ENCODE measurements at regions of chr7 and their contacts with region 1.

Region 1: GRCh38 chr7:43756368-43757072 is 2.0 kb upstream of the BLVRA start:
- DNase-seq: peak in 1 of 5 donors; percentile 18
- ATAC-seq: no peak
- H3K4me3 ChIP-seq: no peak overlapping the region
- H3K27ac ChIP-seq: peak overlapping the region in 1 of 12 donors; percentile 82
- H3K4me1 ChIP-seq: peaks cover 0 to 59% (median 8%) of the 10 kb centered on the region in 12 donors
- H3K27me3 ChIP-seq: no peaks in the 10 kb centered on the region
- CTCF ChIP-seq: no peak
- POLR2A ChIP-seq: no peak

Region 2: DNA sequence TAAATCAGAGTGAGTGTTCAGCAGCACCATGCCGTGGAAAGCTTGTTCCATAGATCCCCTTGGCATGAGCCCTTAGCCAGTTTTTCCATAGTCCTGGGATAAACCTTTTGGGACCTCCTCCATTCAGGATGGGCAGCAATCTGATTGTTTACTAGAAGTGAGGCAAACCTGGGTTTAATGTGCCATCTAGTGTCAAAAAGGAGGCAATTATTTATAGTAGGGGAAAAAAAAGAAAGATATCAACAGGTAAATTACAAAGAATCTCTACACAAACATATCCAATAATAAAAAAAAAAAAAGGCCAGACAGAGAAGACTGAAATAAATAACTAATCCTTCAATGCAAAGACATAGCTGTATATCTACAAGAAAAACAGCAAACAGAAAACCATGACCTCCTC is 402.6 kb before region 1 on chr7:
- intact Hi-C with region 1: no loop called
- DNase-seq: no peak
- ATAC-seq: no peak
- H3K4me3 ChIP-seq: no peak overlapping the region
- H3K27ac ChIP-seq: no peak overlapping the region
- H3K4me1 ChIP-seq: no peaks in the 10 kb centered on the region
- H3K27me3 ChIP-seq: peaks cover 0 to 12% (median 0%) of the 10 kb centered on the region in 9 donors
- CTCF ChIP-seq: no peak
- POLR2A ChIP-seq: no peak

Region 3: GRCh38 chr7:43621729-43622448 is 134.6 kb before region 1 on chr7:
- intact Hi-C with region 1: no loop called
- DNase-seq: no peak
- ATAC-seq: no peak
- H3K4me3 ChIP-seq: no peak overlapping the region
- H3K27ac ChIP-seq: peak overlapping the region in 1 of 12 donors; percentile 9
- H3K4me1 ChIP-seq: peaks cover 0 to 55% (median 10%) of the 10 kb centered on the region in 12 donors
- H3K27me3 ChIP-seq: no peaks in the 10 kb centered on the region
- CTCF ChIP-seq: no peak
- POLR2A ChIP-seq: no peak

Region 4: GRCh38 chr7:43729214-43729923 is 27.2 kb before region 1 on chr7 and contains the start of gene COA1:
- intact Hi-C with region 1: loop called in 1 of 10 experiments (anchors 2 kb)
- DNase-seq: peak; percentile 83 to 91 (median 89)
- ATAC-seq: peak; percentile 98 to 99 (median 99)
- H3K4me3 ChIP-seq: peak within 1 kb of the TSS; percentile 60 to 95 (median 81)
- H3K27ac ChIP-seq: peak within 1 kb of the TSS; percentile 82 to 92 (median 88)
- H3K4me1 ChIP-seq: peaks cover 0 to 42% (median 19%) of the 10 kb centered on the region in 12 donors
- H3K27me3 ChIP-seq: no peaks in the 10 kb centered on the region
- CTCF ChIP-seq: peak in 1 of 12 donors; percentile 19
- POLR2A ChIP-seq: peak in 1 of 2 donors; percentile 57
- total RNA-seq, gene COA1: 57.5 to 81.2 (median 68.2) TPM

Region 5: DNA sequence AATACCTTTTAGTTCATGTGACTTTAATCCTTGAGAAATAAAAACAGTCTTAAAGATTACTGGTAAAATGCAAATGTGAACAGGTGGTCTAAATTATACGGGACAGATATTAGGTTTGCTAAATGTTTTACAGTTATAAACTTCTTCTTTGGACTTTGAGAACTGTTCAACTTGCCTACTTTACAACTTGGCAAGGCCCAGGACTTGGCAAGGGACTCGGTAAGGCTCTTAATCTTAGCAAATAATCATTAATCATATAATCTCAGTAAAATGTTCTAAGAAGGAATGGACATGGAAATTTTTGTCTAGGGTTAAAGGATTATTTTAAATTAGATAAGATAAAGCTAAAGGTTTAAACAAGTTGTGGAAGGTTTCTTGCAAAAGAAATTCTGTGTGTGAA is 164.9 kb after region 1 on chr7:
- intact Hi-C with region 1: no loop called
- DNase-seq: no peak
- ATAC-seq: no peak
- H3K4me3 ChIP-seq: no peak overlapping the region
- H3K27ac ChIP-seq: no peak overlapping the region
- H3K4me1 ChIP-seq: peaks cover 0 to 10% (median 6%) of the 10 kb centered on the region in 12 donors
- H3K27me3 ChIP-seq: no peaks in the 10 kb centered on the region
- CTCF ChIP-seq: no peak
- POLR2A ChIP-seq: no peak

Region 6: GRCh38 chr7:44218418-44219201 is 462.1 kb after region 1 on chr7:
- intact Hi-C with region 1: no loop called
- DNase-seq: peak in 2 of 5 donors; percentile 19 to 50
- ATAC-seq: no peak
- H3K4me3 ChIP-seq: no peak overlapping the region
- H3K27ac ChIP-seq: no peak overlapping the region
- H3K4me1 ChIP-seq: peaks cover 0 to 3% (median 0%) of the 10 kb centered on the region in 12 donors
- H3K27me3 ChIP-seq: no peaks in the 10 kb centered on the region
- CTCF ChIP-seq: no peak
- POLR2A ChIP-seq: no peak